Cardiac septum (tissue), 1 donor: ENCODE measurements at regions of chr10 and their contacts with region 1.

Region 1: DNA sequence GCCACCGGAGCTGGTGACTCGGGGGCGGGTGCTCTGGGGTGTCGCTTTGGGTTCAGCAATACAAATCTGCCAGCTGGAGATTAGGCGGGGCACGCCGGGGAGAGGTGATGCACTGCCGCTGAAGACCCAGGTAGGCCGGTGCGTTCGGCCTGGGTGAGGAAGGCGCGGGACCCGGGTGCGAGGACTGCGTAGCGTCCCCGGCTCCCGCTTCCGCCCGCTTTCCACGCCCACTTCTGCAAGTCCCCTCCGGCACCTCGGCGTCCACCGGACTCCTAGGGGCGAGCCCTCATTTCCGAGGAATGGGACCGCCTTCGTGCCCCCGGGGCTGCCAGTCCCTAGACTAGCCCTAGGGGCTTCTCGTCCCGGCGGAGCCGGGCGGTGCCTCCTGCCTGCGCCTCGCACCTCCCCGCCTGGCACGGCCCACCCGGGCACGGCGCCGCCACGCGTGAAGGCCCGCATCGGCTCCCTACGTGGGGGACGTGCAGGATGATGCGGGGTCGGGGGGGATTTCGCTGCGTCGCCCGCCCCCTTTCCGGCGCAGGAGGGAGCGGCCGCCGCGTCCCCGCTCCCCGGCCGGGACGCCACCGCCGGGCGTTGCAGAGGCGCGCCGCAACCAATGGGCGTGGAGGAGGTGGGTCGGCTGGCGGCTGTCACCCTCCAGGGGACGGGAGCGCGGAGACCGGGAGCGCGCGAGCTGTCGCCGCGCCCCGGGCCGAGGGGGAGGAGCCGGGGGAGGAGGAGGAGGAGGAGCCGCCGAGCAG is 40.0 kb downstream of the HK1 start:
- DNase-seq: peak; percentile 97

Region 2: DNA sequence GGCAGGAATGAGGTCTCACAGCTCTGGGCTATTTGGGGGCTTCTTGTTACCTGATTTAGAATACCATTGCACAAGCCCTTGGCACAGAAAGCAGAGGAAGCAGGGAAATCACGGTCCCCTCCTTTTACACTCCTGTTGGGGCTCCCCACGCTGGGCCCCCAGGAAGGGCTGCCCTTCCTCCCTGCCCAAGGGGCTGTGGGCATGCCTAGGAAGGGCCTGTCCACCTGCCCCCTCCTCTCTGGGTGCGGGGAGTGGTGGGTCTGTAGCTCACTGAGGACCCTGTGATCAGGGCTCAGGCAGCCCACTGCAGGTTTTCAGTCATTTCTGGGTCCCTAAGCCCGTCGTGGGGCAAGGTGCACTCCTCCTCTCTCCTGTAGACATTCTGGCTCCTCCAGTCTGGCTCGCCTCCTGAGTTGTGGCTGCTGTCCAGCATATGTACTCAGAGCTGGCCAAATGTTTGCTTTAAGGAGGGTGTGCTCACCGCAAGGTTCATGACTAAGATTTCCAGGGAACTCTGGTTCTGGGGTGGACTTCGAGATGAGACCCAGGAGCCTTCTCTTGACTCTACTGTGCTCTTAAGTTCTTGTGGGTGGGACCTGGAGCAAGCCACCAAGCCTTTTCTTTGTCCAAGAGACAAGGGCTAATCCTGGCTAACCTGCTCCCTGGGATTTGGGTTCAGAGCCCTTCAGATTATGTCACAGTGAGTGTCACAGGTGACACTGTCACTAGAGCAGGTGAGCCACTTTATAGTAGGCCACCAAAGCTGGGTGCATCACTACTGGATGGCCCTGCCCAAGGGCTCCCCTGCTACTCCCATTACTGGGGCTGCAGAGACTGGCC is 42.4 kb after region 1 on chr10:
- intact Hi-C with region 1: loop called (anchors 2 kb)
- DNase-seq: no peak

Region 3: GRCh38 chr10:69375307-69376151 is 57.2 kb after region 1 on chr10:
- intact Hi-C with region 1: loop called (anchors 5 kb)
- DNase-seq: no peak

Region 4: GRCh38 chr10:69408318-69409175 is 90.3 kb after region 1 on chr10:
- intact Hi-C with region 1: loop called (anchors 5 kb)
- DNase-seq: peak; percentile 97

Region 5: DNA sequence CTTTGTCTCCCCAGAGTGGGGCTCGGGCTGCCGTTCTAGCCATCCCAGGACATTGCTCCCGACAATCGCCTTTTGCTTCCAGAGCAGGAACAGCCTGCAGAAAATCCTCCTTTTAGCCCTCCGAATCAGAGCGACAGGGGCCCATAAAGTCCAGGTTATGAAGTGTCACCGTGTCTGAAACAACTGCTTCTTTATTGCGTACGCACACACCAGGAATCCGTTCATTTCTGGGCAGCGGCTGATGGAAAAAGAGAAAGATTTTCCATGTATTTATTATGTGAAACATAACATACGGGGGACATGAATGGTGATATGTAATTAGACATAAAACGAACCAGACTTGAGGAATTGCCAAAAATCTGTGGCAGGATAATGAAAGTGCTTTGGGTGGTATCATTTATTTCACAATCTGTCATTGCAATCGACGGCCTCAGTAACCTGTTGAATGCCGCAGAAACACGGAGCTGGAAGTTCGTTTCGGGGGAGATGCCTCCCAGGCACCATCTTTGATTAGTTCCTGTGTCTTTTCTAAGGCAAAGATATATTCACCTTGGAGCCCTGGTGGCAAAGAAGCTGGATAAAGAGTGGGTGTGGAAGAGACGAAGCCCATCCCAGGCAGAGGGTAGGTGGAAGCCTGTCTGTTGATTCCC is 359.8 kb after region 1 on chr10:
- intact Hi-C with region 1: no loop called
- DNase-seq: no peak

Region 6: GRCh38 chr10:69728335-69728870 is 410.1 kb after region 1 on chr10:
- intact Hi-C with region 1: no loop called
- DNase-seq: no peak